SK-N-SH (cell line): ENCODE measurements at regions of chr20 and their contacts with region 1.

Region 1: GRCh38 chr20:37276494-37277252 is 12.8 kb upstream of the MANBAL start:
- DNase-seq: peak; percentile 63
- H3K4me3 ChIP-seq: no peak overlapping the region
- H3K27ac ChIP-seq: peak overlapping the region in 1 of 2 experiments; percentile 26; a peak in 2 of 4 replicates
- H3K4me1 ChIP-seq: peaks cover 0 to 19% of the 10 kb centered on the region in 2 experiments; a peak in 1 of 4 replicates
- H3K27me3 ChIP-seq: no peaks in the 10 kb centered on the region
- CTCF ChIP-seq: peak; percentile 41
- EP300 ChIP-seq: peak in 1 of 2 experiments; percentile 19; a peak in 1 of 4 replicates
- RAD21 ChIP-seq: peak; percentile 73

Region 2: DNA sequence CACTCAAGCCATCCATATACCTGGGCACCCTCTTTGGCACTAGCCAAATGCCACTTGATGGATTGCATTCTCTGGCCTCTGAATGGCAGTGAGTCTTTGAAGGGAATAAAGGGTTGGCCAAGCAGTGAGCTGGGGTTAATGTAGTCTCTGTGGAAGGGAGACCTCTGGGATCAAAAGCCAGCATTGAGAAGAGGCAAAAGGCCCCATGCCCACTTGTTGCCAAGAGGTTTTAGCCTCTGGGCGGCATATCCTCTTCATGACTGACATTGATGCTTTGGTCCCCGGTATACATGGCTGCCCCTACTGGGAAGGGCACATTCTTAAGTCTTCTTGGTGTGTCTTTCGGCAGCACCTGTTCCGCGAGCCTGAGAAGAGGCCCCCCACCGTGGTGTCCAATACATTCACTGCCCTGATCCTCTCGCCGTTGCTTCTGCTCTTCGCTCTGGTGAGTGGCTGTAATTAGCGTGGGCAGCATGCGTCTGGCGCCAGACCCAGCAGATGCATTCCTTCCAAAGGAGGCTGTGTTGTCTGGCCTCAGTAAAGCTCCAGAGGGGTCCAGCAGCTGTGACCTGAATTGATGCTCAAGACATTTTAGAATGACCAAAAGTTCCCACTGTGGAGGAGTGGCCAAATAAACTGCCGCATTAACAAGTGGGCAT is 44.6 kb before region 1 on chr20:
- CTCF ChIA-PET with region 1: no interaction called
- POLR2A ChIA-PET with region 1: no interaction called
- DNase-seq: peak; percentile 57
- H3K4me3 ChIP-seq: no peak overlapping the region
- H3K27ac ChIP-seq: peak overlapping the region; percentile 20 to 99; a peak in 3 of 4 replicates
- H3K4me1 ChIP-seq: peaks cover 0 to 58% of the 10 kb centered on the region in 2 experiments; a peak in 2 of 4 replicates
- H3K27me3 ChIP-seq: no peaks in the 10 kb centered on the region
- CTCF ChIP-seq: no peak
- EP300 ChIP-seq: peak in 1 of 2 experiments; percentile 75; a peak in 2 of 4 replicates
- RAD21 ChIP-seq: peak; percentile 20; the same call in 1 of the 2 replicates

Region 3: DNA sequence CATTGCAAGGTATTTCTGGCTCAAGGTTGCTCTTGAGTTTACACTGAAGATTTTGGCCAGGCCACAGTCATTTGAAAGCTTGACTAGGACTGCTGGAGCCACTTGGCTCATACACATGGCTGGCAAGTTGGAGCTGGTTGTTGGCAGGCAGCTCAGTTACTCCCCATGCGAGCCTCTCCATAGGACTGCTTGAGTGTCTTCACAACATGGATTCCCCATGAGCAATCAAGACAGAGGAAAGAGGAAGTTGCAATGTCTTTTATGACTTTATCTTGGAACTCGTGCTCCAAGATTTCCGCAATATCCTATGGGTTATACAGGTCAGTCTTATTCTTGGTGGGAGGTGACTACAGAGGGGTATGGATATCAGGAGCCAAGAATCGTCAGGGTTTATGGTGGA is 11.4 kb after region 1 on chr20:
- CTCF ChIA-PET with region 1: interaction called, 32 read pairs
- POLR2A ChIA-PET with region 1: interaction called, 9 read pairs
- DNase-seq: no peak
- H3K4me3 ChIP-seq: no peak overlapping the region
- H3K27ac ChIP-seq: no peak overlapping the region
- H3K4me1 ChIP-seq: peaks cover 8 to 15% of the 10 kb centered on the region in 2 experiments; a peak in 2 of 4 replicates
- H3K27me3 ChIP-seq: no peaks in the 10 kb centered on the region
- CTCF ChIP-seq: no peak
- EP300 ChIP-seq: no peak
- RAD21 ChIP-seq: no peak